Caco-2 (cell line): ENCODE measurements at regions of chr1 and their contacts with region 1.

Region 1: GRCh38 chr1:91511386-91511785 is 10.7 kb downstream of the CDC7 start:
- DNase-seq: peak in 1 of 2 experiments; percentile 17
- H3K4me3 ChIP-seq: no peak overlapping the region
- H3K4me3 Mint-ChIP-seq: no peak overlapping the region
- H3K27ac Mint-ChIP-seq: no peak overlapping the region
- H3K4me1 ChIP-seq: no peaks in the 10 kb centered on the region
- H3K4me1 Mint-ChIP-seq: no peaks in the 10 kb centered on the region
- H3K27me3 ChIP-seq: no peaks in the 10 kb centered on the region
- H3K27me3 Mint-ChIP-seq: no peaks in the 10 kb centered on the region
- CTCF ChIP-seq: peak; percentile 47 to 48

Region 2: DNA sequence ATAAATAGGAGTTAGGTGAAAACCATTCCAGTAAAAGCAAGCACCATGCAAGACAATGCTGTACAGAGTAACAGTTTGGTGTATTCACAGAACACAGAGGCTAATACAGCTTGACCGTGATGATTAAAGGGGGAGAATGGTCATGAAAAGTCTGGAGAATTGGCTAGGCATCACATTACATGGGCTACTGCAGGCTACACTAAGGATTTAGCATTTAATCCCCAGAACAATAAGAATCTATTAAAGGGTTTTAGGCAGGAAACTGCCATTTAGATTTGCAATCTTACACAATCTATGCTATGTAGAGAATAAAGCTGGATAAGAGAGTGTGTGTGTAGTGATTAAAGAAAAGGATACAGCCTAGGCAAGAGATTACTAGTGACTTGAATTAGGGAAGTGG is 137.3 kb before region 1 on chr1:
- CTCF ChIA-PET with region 1: no interaction called
- POLR2A ChIA-PET with region 1: no interaction called
- intact Hi-C with region 1: no loop called
- DNase-seq: no peak
- H3K4me3 ChIP-seq: no peak overlapping the region
- H3K4me3 Mint-ChIP-seq: no peak overlapping the region
- H3K27ac Mint-ChIP-seq: no peak overlapping the region
- H3K4me1 ChIP-seq: no peaks in the 10 kb centered on the region
- H3K4me1 Mint-ChIP-seq: no peaks in the 10 kb centered on the region
- H3K27me3 ChIP-seq: no peaks in the 10 kb centered on the region
- H3K27me3 Mint-ChIP-seq: peaks cover 3% of the 10 kb centered on the region
- CTCF ChIP-seq: no peak

Region 3: GRCh38 chr1:91583326-91583755 is 72.0 kb after region 1 on chr1:
- CTCF ChIA-PET with region 1: no interaction called
- POLR2A ChIA-PET with region 1: no interaction called
- intact Hi-C with region 1: no loop called
- DNase-seq: no peak
- H3K4me3 ChIP-seq: no peak overlapping the region
- H3K4me3 Mint-ChIP-seq: no peak overlapping the region
- H3K27ac Mint-ChIP-seq: no peak overlapping the region
- H3K4me1 ChIP-seq: peaks cover 5% of the 10 kb centered on the region
- H3K4me1 Mint-ChIP-seq: peaks cover 11% of the 10 kb centered on the region
- H3K27me3 ChIP-seq: no peaks in the 10 kb centered on the region
- H3K27me3 Mint-ChIP-seq: no peaks in the 10 kb centered on the region
- CTCF ChIP-seq: no peak

Region 4: DNA sequence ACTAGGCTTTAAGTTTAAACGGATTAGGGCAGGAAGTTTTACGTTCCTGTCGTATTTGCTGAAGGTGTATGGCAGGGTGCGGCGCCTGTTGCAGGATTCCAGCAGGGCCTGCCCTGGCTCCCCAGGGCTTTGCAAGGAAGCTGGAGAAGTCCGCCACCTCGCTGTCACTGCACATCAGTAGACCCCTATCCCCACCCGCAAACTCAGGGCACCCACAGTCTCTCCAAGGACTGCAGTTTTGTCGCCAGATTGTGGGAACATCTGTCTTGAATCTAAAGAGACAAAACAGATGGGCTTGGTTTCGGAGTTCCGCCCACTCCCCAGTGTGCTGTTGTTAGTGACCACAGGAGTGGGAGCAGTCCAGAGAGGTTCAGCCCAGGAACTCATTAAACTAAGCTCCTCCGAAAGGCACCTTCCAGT is 100.1 kb after region 1 on chr1:
- CTCF ChIA-PET with region 1: no interaction called
- POLR2A ChIA-PET with region 1: no interaction called
- intact Hi-C with region 1: loop called (anchors 1 kb)
- DNase-seq: peak; percentile 86 to 93
- H3K4me3 ChIP-seq: no peak overlapping the region
- H3K4me3 Mint-ChIP-seq: peak overlapping the region; percentile 33
- H3K27ac Mint-ChIP-seq: peak overlapping the region; percentile 95
- H3K4me1 ChIP-seq: peaks cover 47% of the 10 kb centered on the region
- H3K4me1 Mint-ChIP-seq: peaks cover 24% of the 10 kb centered on the region
- H3K27me3 ChIP-seq: no peaks in the 10 kb centered on the region
- H3K27me3 Mint-ChIP-seq: no peaks in the 10 kb centered on the region
- CTCF ChIP-seq: peak in 1 of 2 experiments; percentile 41

Region 5: DNA sequence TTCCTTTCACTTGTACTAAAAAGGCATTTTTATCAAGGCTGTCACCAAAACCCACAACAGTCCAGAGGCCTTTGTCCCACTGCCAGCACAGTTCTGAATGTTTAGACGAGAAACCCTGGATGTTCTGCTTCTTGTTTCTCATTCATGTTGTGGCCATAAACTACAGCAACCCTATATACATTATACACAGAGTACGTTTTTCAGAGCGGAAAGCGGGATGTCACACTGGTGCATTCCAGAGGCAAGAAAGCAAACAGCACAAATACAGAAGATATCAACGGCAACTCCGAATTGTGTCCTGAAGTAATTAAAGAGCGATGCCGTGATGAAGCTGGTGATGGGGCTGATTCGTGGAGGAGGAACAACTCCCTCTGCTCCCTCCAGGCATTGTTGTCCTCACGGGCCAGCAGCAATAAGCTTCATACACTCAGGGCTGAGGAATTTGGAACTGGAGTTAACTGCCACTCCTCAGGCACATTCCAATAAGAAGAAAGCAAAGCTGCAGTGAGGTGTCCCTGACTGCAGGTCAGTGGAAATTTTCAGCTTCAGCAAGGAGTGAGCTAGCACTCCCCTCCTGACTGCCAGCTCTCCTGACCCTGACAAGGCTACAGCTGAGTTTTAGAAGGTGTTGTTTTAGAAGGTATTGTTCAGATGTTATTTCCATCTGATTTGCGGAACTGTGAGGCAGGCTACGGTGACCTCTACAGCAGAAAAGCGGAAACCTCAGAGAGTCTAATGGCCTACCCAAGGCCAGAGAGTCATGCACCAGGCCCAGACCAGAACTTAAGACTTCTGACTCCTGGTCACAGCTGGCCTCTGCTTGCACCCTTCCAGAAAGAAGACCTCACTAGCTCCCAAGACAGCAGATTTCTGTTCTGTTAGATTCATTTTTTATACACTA is 225.6 kb after region 1 on chr1:
- CTCF ChIA-PET with region 1: no interaction called
- POLR2A ChIA-PET with region 1: no interaction called
- intact Hi-C with region 1: loop called (anchors 5 kb)
- DNase-seq: peak; percentile 77 to 86
- H3K4me3 ChIP-seq: no peak overlapping the region
- H3K4me3 Mint-ChIP-seq: peak overlapping the region; percentile 57
- H3K27ac Mint-ChIP-seq: peak overlapping the region; percentile 97
- H3K4me1 ChIP-seq: peaks cover 37% of the 10 kb centered on the region
- H3K4me1 Mint-ChIP-seq: peaks cover 29% of the 10 kb centered on the region
- H3K27me3 ChIP-seq: no peaks in the 10 kb centered on the region
- H3K27me3 Mint-ChIP-seq: no peaks in the 10 kb centered on the region
- CTCF ChIP-seq: no peak

Region 6: GRCh38 chr1:91795591-91796389 is 284.4 kb after region 1 on chr1:
- CTCF ChIA-PET with region 1: no interaction called
- POLR2A ChIA-PET with region 1: no interaction called
- intact Hi-C with region 1: loop called (anchors 10 kb)
- DNase-seq: no peak
- H3K4me3 ChIP-seq: no peak overlapping the region
- H3K4me3 Mint-ChIP-seq: no peak overlapping the region
- H3K27ac Mint-ChIP-seq: no peak overlapping the region
- H3K4me1 ChIP-seq: 0 out of 2 replicates have a peak, but pooled peaks cover 5% of the 10 kb centered on the region
- H3K4me1 Mint-ChIP-seq: peaks cover 6% of the 10 kb centered on the region
- H3K27me3 ChIP-seq: no peaks in the 10 kb centered on the region
- H3K27me3 Mint-ChIP-seq: no peaks in the 10 kb centered on the region
- CTCF ChIP-seq: no peak

Region 7: DNA sequence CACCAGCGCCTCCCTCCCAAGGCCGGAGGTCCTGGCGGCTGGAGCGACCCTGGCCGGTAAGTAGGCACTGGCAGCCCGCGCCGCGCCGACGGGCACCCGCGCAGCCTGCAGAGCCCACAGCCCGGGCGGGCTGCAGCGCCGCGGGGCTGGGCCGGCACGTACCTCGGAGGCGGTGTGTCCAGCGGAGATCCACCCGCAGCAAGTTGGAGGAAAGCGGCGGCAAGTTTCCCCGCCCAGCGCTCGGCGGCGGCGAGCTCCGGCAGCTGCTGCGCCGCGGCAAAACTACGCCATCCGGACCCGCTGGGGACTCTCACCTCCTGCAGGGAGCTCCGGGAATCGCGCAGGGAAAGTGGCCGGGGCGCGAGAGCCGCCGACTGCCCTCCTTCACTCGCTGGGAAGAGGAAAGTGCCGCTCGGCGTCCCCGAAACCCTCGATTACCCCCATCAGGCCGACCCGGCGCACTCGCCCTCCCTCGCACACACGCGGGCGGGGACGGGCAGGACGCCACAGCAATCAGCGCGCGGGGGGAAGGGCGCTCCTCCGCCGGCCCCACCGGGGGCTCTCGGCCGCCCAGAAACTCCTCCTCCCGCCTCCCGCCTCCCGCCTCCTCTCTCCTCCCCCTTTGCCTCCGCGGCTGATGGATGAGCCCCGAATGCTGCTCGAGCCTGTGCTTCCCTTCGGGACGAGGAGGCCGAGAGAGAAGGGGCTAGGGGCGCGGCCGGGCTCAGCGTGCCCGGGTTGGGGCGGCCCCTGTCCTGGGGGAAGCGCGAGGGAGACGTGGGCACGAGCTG is 374.5 kb after region 1 on chr1 and contains the start of gene TGFBR3:
- CTCF ChIA-PET with region 1: no interaction called
- POLR2A ChIA-PET with region 1: no interaction called
- intact Hi-C with region 1: loop called (anchors 5 kb)
- DNase-seq: peak; percentile 77 to 83
- H3K4me3 ChIP-seq: peak within 1 kb of the TSS; percentile 83
- H3K4me3 Mint-ChIP-seq: peak within 1 kb of the TSS; percentile 83
- H3K27ac Mint-ChIP-seq: peak within 1 kb of the TSS; percentile 13
- H3K4me1 ChIP-seq: no peaks in the 10 kb centered on the region
- H3K4me1 Mint-ChIP-seq: peaks cover 7% of the 10 kb centered on the region
- H3K27me3 ChIP-seq: no peaks in the 10 kb centered on the region
- H3K27me3 Mint-ChIP-seq: no peaks in the 10 kb centered on the region
- CTCF ChIP-seq: peak; percentile 14 to 22
- total RNA-seq, gene TGFBR3: 12.2 and 15.2 TPM in 2 replicates

Region 8: GRCh38 chr1:91924146-91924545 is 412.8 kb after region 1 on chr1:
- CTCF ChIA-PET with region 1: no interaction called
- POLR2A ChIA-PET with region 1: no interaction called
- intact Hi-C with region 1: loop called (anchors 1 kb)
- DNase-seq: no peak
- H3K4me3 ChIP-seq: no peak overlapping the region
- H3K4me3 Mint-ChIP-seq: no peak overlapping the region
- H3K27ac Mint-ChIP-seq: no peak overlapping the region
- H3K4me1 ChIP-seq: no peaks in the 10 kb centered on the region
- H3K4me1 Mint-ChIP-seq: peaks cover 3% of the 10 kb centered on the region
- H3K27me3 ChIP-seq: no peaks in the 10 kb centered on the region
- H3K27me3 Mint-ChIP-seq: no peaks in the 10 kb centered on the region
- CTCF ChIP-seq: no peak